Activated B cell treated with CpG ODN at 0.5 μM for 24 hours (primary cell): ENCODE measurements at regions of chr9 and their contacts with region 1.

Region 1: GRCh38 chr9:127770905-127771569 is 7.4 kb downstream of the SH2D3C start:
- DNase-seq: peak; percentile 98
- ATAC-seq: peak; percentile 90
- H3K4me3 Mint-ChIP-seq: peak overlapping the region; percentile 93
- H3K27ac Mint-ChIP-seq: peak overlapping the region; percentile 93
- H3K4me1 Mint-ChIP-seq: peaks cover 72% of the 10 kb centered on the region
- H3K27me3 Mint-ChIP-seq: no peaks in the 10 kb centered on the region
- CTCF ChIP-seq: no peak

Region 2: GRCh38 chr9:127751269-127752054 is 19.6 kb before region 1 on chr9:
- CTCF ChIA-PET with region 1: no interaction called
- POLR2A ChIA-PET with region 1: interaction called, 3 read pairs
- intact Hi-C with region 1: loop called (anchors 2 kb)
- DNase-seq: no peak
- ATAC-seq: no peak
- H3K4me3 Mint-ChIP-seq: no peak overlapping the region
- H3K27ac Mint-ChIP-seq: peak overlapping the region; percentile 41
- H3K4me1 Mint-ChIP-seq: no peaks in the 10 kb centered on the region
- H3K27me3 Mint-ChIP-seq: no peaks in the 10 kb centered on the region
- CTCF ChIP-seq: no peak

Region 3: GRCh38 chr9:127802576-127803443 is 31.8 kb after region 1 on chr9 and contains the start of gene FPGS:
- CTCF ChIA-PET with region 1: no interaction called
- POLR2A ChIA-PET with region 1: interaction called, 27 read pairs
- intact Hi-C with region 1: loop called (anchors 1 kb)
- DNase-seq: peak; percentile 81
- ATAC-seq: peak; percentile 84
- H3K4me3 Mint-ChIP-seq: peak within 1 kb of the TSS; percentile 93
- H3K27ac Mint-ChIP-seq: peak within 1 kb of the TSS; percentile 87
- H3K4me1 Mint-ChIP-seq: peaks cover 32% of the 10 kb centered on the region
- H3K27me3 Mint-ChIP-seq: no peaks in the 10 kb centered on the region
- CTCF ChIP-seq: no peak
- total RNA-seq, gene FPGS: 105 and 135 TPM in 2 replicates